ENCODE measurements at regions of chr9 and their contacts with region 1.

Region 1: DNA sequence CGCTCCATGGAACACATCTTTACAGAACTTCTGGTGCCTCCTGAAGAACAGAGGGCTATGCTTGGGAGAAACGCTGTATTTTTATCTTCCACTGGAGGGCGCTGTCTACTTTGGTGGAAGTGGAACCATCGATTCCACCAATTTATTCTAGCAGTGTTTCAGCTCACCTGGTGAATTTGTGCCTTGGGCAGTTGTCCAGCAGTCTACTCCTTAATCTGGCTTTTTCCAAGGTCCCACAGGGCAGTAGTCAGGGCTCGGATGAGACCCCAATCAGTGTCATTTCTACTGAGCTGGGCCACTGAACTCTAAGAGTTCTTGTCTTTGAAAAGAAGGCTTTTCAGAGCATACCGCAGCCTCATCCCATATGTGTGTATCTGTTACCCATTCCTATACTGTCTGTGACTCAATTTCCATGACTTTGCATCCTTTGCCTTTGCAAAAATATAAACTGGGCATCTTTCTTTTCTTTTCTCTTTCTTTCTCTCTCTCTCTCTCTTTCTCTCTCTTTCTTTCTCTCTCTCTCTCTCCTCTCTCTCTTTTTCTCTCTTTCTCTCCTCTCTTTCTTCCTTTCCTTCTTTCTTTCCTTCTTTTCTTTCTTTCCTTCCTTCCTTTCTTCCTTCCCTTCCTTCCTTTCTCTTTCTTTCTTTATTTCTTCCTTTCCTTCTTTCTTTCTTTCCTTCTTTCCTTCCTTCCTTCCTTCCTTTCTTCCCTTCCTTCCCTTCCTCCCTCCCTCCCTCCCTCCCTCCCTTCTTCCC is 138.4 kb upstream of the ZNF618 start:
- DNase-seq: peak; percentile 72
- H3K4me3 ChIP-seq: no peak overlapping the region
- H3K27ac ChIP-seq: no peak overlapping the region
- H3K4me1 ChIP-seq: no peaks in the 10 kb centered on the region
- H3K27me3 ChIP-seq: no peaks in the 10 kb centered on the region
- CTCF ChIP-seq: peak; percentile 87

Region 2: DNA sequence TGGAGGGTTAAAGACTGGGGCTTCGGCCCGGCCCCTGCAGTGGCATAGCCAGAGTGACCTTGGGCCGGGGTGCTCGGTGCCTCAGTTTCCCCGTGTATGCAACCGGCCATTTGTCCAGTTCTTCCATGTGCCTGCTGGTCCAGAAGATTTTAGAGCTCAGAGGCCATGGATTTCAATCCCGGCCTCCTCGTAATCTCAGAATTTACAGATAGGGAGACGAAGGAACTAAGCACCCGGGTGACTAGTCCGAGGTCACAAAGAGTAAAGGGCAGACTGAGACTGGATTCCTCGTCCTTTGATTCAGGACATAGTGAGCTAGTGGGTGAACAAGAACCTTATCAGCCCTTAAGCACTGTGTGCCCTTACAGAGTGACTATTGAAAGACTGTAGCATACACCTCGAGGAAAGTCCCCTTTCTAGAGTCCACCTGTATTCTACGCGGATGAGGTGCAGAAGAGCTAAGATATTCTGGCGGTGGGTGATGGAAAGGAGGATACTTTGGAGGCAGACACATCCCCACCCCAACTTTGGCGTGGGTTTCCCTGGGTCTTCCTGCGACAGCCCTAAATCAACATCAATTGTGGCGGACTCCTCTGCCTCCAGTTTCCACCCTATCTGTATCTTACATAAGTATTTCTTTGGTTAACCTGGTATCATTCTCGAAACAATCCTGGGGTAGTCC is 515.8 kb before region 1 on chr9:
- CTCF ChIA-PET with region 1: no interaction called
- POLR2A ChIA-PET with region 1: no interaction called
- intact Hi-C with region 1: no loop called
- DNase-seq: no peak
- H3K4me3 ChIP-seq: peak overlapping the region; percentile 75
- H3K27ac ChIP-seq: peak overlapping the region; percentile 75
- H3K4me1 ChIP-seq: peaks cover 18% of the 10 kb centered on the region
- H3K27me3 ChIP-seq: no peaks in the 10 kb centered on the region
- CTCF ChIP-seq: no peak

Region 3: GRCh38 chr9:113775749-113776148 is 38.1 kb after region 1 on chr9:
- CTCF ChIA-PET with region 1: no interaction called
- POLR2A ChIA-PET with region 1: interaction called, 10 read pairs
- intact Hi-C with region 1: no loop called
- DNase-seq: no peak
- H3K4me3 ChIP-seq: no peak overlapping the region
- H3K27ac ChIP-seq: no peak overlapping the region
- H3K4me1 ChIP-seq: no peaks in the 10 kb centered on the region
- H3K27me3 ChIP-seq: no peaks in the 10 kb centered on the region
- CTCF ChIP-seq: no peak

Region 4: GRCh38 chr9:114033397-114034103 is 295.9 kb after region 1 on chr9:
- CTCF ChIA-PET with region 1: no interaction called
- POLR2A ChIA-PET with region 1: no interaction called
- intact Hi-C with region 1: loop called (anchors 1 kb)
- DNase-seq: peak; percentile 48
- H3K4me3 ChIP-seq: no peak overlapping the region
- H3K27ac ChIP-seq: no peak overlapping the region
- H3K4me1 ChIP-seq: peaks cover 7% of the 10 kb centered on the region
- H3K27me3 ChIP-seq: no peaks in the 10 kb centered on the region
- CTCF ChIP-seq: peak; percentile 66

Region 5: DNA sequence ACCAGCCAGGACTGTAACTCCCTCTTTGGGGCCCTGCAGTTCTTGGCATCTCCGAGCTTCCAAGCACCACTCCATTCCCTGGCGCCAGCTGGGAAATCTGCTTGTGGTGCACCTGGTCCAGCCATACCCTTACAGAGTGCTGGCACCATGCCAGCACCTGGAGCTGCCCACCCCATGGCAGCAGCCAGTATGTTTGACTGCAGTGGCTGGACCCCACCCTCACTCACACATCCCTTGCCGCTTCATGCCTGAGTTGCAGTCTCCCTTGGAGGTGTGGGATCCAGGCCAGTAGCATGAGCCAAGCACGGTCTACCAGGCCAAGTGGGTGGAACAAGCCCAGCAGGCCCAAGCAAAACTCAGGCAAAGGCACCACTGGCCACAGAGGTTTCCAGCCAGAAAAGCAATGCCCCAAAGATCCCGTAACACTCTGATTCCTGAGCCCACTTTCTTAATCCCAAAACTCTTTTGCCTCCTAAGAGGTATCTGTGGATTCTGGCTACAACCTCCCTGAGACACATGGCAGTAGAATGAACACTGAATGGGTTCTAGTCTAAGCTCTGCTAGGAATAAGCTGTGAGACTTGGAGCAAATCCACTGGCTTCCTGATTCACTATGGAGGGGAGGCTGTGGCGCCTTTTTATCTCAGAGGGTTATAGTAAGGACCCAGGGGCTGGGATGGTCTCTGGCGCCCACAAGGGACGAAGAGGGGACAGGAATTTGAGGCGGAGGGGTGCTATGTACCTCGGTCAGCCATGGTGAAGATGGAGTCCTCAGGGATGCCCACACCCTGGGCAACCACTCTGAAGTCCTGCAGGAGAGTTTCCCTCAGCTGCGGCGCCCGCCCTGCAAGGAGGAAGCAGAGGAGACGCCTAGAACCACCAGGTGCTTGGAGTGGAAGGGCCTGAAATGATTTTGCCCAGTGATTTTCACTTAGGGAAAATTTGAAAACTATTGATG is 334.8 kb after region 1 on chr9:
- CTCF ChIA-PET with region 1: no interaction called
- POLR2A ChIA-PET with region 1: no interaction called
- intact Hi-C with region 1: loop called (anchors 5 kb)
- DNase-seq: peak; percentile 23
- H3K4me3 ChIP-seq: no peak overlapping the region
- H3K27ac ChIP-seq: no peak overlapping the region
- H3K4me1 ChIP-seq: no peaks in the 10 kb centered on the region
- H3K27me3 ChIP-seq: peaks cover 8% of the 10 kb centered on the region
- CTCF ChIP-seq: peak; percentile 39